Natural killer cell (primary cell): ENCODE measurements at regions of chr15 and their contacts with region 1.

Region 1: GRCh38 chr15:98085003-98085639 is 124.6 kb downstream of the ARRDC4 start:
- DNase-seq: peak in 1 of 2 donors; percentile 64
- ATAC-seq: peak in 1 of 3 donors; percentile 66
- H3K4me3 ChIP-seq: no peak overlapping the region
- H3K4me3 Mint-ChIP-seq: no peak overlapping the region
- H3K27ac ChIP-seq: no peak overlapping the region
- H3K27ac Mint-ChIP-seq: no peak overlapping the region
- H3K4me1 ChIP-seq: no peaks in the 10 kb centered on the region
- H3K4me1 Mint-ChIP-seq: peaks cover 0 to 7% of the 10 kb centered on the region in 2 donors
- H3K27me3 ChIP-seq: no peaks in the 10 kb centered on the region
- H3K27me3 Mint-ChIP-seq: no peaks in the 10 kb centered on the region
- CTCF ChIP-seq: peak; percentile 73

Region 2: DNA sequence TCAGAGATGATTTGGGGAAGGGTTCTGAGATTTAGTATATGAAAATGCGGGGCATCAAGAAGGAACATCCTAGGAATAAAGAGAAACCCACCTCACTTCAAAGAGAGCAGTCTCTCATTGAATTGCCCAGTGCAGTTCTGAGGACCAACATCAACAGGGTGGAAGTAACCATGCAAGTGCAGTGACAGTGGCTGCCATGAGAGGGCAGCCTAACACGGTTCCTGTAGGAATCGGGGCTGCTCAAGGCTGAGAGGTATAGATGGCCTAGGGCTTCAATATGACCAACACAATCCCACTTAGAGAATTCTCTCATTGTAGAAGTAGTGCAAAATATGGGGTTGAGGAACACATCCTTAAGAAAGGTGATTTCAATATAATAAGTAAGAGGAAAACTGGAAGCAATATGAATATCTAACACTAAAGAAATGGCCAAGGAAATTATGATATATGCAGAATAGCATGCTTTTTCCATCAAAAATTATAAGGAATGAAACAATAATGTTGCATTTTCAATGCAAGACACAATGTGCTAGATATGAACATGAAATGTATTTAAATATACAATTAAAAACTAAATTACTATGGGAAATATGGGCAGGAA is 175.7 kb before region 1 on chr15:
- intact Hi-C with region 1: loop called (anchors 1 kb)
- DNase-seq: peak; percentile 61 to 70
- ATAC-seq: peak; percentile 80 to 97 (median 97)
- H3K4me3 ChIP-seq: no peak overlapping the region
- H3K4me3 Mint-ChIP-seq: no peak overlapping the region
- H3K27ac ChIP-seq: no peak overlapping the region
- H3K27ac Mint-ChIP-seq: no peak overlapping the region
- H3K4me1 ChIP-seq: no peaks in the 10 kb centered on the region
- H3K4me1 Mint-ChIP-seq: no peaks in the 10 kb centered on the region
- H3K27me3 ChIP-seq: no peaks in the 10 kb centered on the region
- H3K27me3 Mint-ChIP-seq: peaks cover 39 to 69% of the 10 kb centered on the region in 2 donors
- CTCF ChIP-seq: peak; percentile 96